ENCODE measurements at regions of chr7 and their contacts with region 1.

Region 1: GRCh38 chr7:5780801-5781496 is 514 bp downstream of the RNF216 start:
- DNase-seq: peak; percentile 82
- H3K4me3 Mint-ChIP-seq: peak overlapping the region; percentile 89
- H3K27ac Mint-ChIP-seq: peak overlapping the region; percentile 91
- H3K4me1 Mint-ChIP-seq: peaks cover 36% of the 10 kb centered on the region
- H3K27me3 Mint-ChIP-seq: no peaks in the 10 kb centered on the region

Region 2: GRCh38 chr7:5822742-5823503 is 42.0 kb after region 1 on chr7:
- intact Hi-C with region 1: loop called (anchors 2 kb)
- DNase-seq: peak; percentile 99
- H3K4me3 Mint-ChIP-seq: peak overlapping the region; percentile 85
- H3K27ac Mint-ChIP-seq: peak overlapping the region; percentile 88
- H3K4me1 Mint-ChIP-seq: peaks cover 18% of the 10 kb centered on the region
- H3K27me3 Mint-ChIP-seq: no peaks in the 10 kb centered on the region

Region 3: DNA sequence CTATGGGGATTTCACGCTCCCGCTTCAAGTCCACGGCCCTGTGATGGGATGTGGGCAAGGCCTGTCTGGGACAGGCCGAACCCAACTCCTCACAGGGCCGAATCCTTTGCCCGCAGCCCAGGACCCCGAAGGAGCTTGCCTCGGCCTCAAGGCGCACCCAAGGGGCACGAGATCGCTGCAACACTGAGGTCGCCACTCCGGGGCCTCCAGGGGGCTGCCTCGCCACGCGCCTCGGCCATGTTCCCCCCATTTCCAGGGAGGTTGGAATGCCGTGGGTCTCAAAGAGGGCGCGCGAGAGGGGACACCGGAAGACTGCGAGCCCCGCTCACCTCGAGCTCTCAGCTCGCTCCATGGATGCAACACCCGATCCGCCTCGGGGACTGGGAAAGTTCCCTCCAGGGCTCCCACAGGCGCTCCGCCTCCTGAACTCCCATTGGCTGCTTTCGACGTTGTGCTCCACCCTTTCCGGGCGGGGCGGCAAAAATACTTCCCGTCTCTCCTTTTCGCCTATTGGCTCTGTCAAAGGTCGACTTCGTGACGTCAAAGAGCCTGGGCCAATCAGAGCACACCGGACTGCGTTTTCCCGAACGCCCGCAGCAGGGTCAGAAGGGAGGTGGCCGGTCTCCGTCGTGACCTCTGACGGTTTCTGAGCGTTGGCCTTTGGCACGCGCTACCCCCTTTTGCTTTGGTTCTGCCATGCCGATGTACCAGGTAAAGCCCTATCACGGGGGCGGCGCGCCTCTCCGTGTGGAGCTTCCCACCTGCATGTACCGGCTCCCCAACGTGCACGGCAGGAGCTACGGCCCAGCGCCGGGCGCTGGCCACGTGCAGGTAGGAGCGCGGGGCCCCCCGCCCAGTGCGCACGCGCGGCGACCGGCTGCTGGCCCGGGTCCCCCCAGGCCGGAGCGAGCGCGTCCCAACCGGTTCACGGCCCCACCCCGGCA is 228.0 kb after region 1 on chr7 and contains the starts of genes AIMP2 and PMS2:
- intact Hi-C with region 1: loop called (anchors 2 kb)
- DNase-seq: peak; percentile 100
- H3K4me3 Mint-ChIP-seq: peak within 1 kb of the TSS; percentile 91
- H3K27ac Mint-ChIP-seq: peak within 1 kb of the TSS; percentile 95
- H3K4me1 Mint-ChIP-seq: peaks cover 30% of the 10 kb centered on the region
- H3K27me3 Mint-ChIP-seq: no peaks in the 10 kb centered on the region
- total RNA-seq, gene AIMP2: 86.2 and 95.6 TPM in 2 replicates
- total RNA-seq, gene PMS2: 23.6 and 24.1 TPM in 2 replicates

Measured in activated CD4-positive, alpha-beta T cell treated with anti-CD3 and anti-CD28 coated beads, Interleukin-2, amount 10 ng/mL, durations not matched to agents 24 days and 14 days (primary cell).